GM12878 (cell line): ENCODE measurements at regions of chr5 and their contacts with region 1.

Region 1: DNA sequence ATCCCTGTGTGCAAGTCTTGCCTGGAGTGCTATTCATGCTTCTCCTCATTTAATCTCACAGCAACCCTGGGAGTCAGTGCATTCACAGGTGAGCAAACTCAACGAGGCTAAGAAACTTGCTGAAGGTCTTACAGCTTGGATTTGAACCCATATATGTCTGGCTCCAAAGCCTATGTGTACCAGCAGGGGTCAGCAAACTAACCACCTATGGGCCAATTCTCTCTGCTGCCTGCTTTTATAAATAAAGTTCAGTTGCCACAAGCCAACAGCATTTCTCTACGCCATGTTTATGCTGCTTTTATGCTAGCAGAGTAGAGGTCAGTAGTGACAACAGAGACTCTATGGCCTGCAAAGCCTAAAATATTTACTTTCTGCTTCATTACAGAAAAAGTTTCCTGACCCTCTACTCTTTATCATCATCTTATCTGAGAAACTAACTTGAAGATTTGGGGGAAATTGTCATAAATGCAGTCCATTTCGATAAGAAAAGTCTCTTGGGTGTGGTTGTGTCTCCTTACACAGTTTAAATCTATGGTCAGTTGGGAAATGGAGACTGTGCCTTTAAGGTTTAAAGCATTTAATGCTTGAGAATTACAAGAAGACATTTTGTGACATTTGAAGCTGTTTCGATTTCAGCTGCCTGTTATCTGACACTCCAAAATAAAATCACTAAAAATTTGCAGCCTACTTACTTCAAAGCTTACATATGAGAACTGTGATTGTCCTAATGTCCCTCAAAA is 137.7 kb downstream of the PRELID2 start:
- DNase-seq: no peak
- ATAC-seq: peak; percentile 85
- H3K4me3 ChIP-seq: no peak overlapping the region
- H3K27ac ChIP-seq: no peak overlapping the region
- H3K4me1 ChIP-seq: no peaks in the 10 kb centered on the region
- H3K27me3 ChIP-seq: no peaks in the 10 kb centered on the region
- CTCF ChIP-seq: peak; percentile 51 to 62 (median 62); a peak in 5 of 6 replicates
- EP300 ChIP-seq: no peak
- POLR2A ChIP-seq: no peak
- RAD21 ChIP-seq: peak; percentile 51

Region 2: DNA sequence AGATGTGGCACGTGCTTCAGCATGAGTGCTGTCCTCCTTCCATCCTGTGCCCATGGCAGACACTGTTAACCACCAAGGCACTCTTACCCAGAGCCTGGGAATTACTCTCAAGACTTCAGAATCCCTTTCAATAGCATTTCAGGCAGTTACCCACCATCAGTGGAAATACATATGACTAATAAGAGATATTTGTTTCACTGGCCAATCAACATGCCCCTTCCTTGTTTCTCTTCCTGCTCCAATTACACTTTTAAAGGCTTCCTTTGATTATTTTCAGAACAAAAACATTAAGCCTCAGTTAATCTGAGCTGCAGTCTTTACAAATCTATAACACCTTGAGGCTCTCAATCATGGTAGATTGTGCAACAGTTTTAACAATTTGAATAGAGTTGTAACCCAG is 66.9 kb after region 1 on chr5:
- CTCF ChIA-PET with region 1: no interaction called
- POLR2A ChIA-PET with region 1: no interaction called
- RAD21 ChIA-PET with region 1: no interaction called
- SMC1A ChIA-PET with region 1: no interaction called
- in situ Hi-C with region 1: no loop called
- intact Hi-C with region 1: no loop called
- DNase-seq: no peak
- ATAC-seq: no peak
- H3K4me3 ChIP-seq: no peak overlapping the region
- H3K27ac ChIP-seq: no peak overlapping the region
- H3K4me1 ChIP-seq: no peaks in the 10 kb centered on the region
- H3K27me3 ChIP-seq: no peaks in the 10 kb centered on the region
- CTCF ChIP-seq: no peak
- EP300 ChIP-seq: no peak
- POLR2A ChIP-seq: no peak
- RAD21 ChIP-seq: no peak

Region 3: GRCh38 chr5:145774442-145774841 is 77.0 kb after region 1 on chr5:
- CTCF ChIA-PET with region 1: no interaction called
- POLR2A ChIA-PET with region 1: no interaction called
- RAD21 ChIA-PET with region 1: no interaction called
- SMC1A ChIA-PET with region 1: no interaction called
- in situ Hi-C with region 1: no loop called
- intact Hi-C with region 1: no loop called
- DNase-seq: no peak
- ATAC-seq: no peak
- H3K4me3 ChIP-seq: no peak overlapping the region
- H3K27ac ChIP-seq: no peak overlapping the region
- H3K4me1 ChIP-seq: no peaks in the 10 kb centered on the region
- H3K27me3 ChIP-seq: no peaks in the 10 kb centered on the region
- CTCF ChIP-seq: no peak
- EP300 ChIP-seq: no peak
- POLR2A ChIP-seq: no peak
- RAD21 ChIP-seq: no peak

Region 4: DNA sequence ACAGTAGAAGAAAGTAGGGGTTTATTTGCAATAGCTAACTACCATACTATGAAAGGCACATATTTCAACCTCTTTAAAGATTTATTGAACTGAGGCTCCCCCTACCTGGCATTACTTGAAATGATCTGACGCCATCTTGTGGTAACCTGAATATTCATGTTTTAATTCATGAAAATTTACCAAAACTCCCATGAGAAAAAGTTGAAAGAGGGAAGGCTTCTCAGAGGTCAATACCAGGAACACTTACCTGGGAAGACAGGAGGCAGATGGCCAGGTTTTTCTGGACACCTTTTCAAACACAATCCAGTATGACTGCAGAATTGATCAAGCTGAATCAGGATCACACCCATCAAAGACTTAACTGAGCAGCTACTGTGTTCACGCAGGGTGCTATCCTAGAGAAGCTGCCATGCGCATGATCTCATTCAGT is 128.3 kb after region 1 on chr5:
- CTCF ChIA-PET with region 1: interaction called, 45 read pairs
- POLR2A ChIA-PET with region 1: no interaction called
- RAD21 ChIA-PET with region 1: interaction called, 5 read pairs
- SMC1A ChIA-PET with region 1: interaction called, 7 read pairs
- in situ Hi-C with region 1: no loop called
- intact Hi-C with region 1: loop called (anchors 1 kb)
- DNase-seq: no peak
- ATAC-seq: peak; percentile 82
- H3K4me3 ChIP-seq: no peak overlapping the region
- H3K27ac ChIP-seq: no peak overlapping the region
- H3K4me1 ChIP-seq: no peaks in the 10 kb centered on the region
- H3K27me3 ChIP-seq: no peaks in the 10 kb centered on the region
- CTCF ChIP-seq: peak; percentile 61 to 73 (median 70)
- EP300 ChIP-seq: no peak
- POLR2A ChIP-seq: no peak
- RAD21 ChIP-seq: peak; percentile 65

Region 5: DNA sequence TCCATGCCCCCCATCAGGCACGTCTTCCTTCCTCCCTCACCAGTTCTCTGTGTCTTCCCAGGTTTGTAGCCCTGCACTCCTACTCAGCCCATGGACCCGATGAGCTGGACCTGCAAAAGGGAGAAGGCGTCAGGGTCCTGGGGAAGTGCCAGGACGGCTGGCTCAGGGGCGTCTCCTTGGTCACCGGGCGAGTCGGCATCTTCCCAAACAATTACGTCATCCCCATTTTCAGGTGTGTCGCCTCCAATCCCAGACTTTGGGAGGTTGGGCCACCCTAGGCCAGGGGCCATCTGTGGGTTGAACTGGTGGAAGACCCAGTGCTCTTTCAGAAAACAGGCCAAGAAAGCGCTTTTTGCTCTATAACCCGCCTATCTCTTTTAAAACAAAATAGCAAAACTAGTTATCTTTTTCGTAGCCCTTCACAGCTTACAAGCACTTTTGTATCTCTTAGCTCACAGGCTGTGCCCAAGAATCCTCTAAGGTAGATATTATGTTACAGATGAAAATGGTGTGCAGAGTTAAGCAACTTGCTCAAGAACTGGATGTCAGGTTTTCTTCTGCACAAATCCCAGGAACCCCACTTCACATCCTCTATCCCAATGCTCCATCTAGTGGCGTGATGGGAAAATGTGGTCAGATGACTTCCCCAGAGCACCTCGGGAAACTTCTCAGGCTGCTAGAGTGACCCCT is 351.7 kb after region 1 on chr5:
- CTCF ChIA-PET with region 1: no interaction called
- POLR2A ChIA-PET with region 1: no interaction called
- RAD21 ChIA-PET with region 1: interaction called, 3 read pairs
- SMC1A ChIA-PET with region 1: no interaction called
- in situ Hi-C with region 1: no loop called
- intact Hi-C with region 1: loop called (anchors 5 kb)
- DNase-seq: no peak
- ATAC-seq: peak; percentile 59
- H3K4me3 ChIP-seq: no peak overlapping the region
- H3K27ac ChIP-seq: no peak overlapping the region
- H3K4me1 ChIP-seq: no peaks in the 10 kb centered on the region
- H3K27me3 ChIP-seq: no peaks in the 10 kb centered on the region; a peak in 3 of 4 replicates
- CTCF ChIP-seq: peak; percentile 34 to 52 (median 40); a peak in 4 of 6 replicates
- EP300 ChIP-seq: no peak
- POLR2A ChIP-seq: no peak
- RAD21 ChIP-seq: peak; percentile 68

Region 6: GRCh38 chr5:146130440-146131045 is 433.1 kb after region 1 on chr5:
- CTCF ChIA-PET with region 1: interaction called, 10 read pairs
- POLR2A ChIA-PET with region 1: no interaction called
- RAD21 ChIA-PET with region 1: interaction called, 3 read pairs
- SMC1A ChIA-PET with region 1: interaction called, 7 read pairs
- in situ Hi-C with region 1: no loop called
- intact Hi-C with region 1: loop called (anchors 5 kb)
- DNase-seq: no peak
- ATAC-seq: no peak
- H3K4me3 ChIP-seq: no peak overlapping the region
- H3K27ac ChIP-seq: no peak overlapping the region
- H3K4me1 ChIP-seq: no peaks in the 10 kb centered on the region
- H3K27me3 ChIP-seq: no peaks in the 10 kb centered on the region
- CTCF ChIP-seq: peak; percentile 30 to 58 (median 49); a peak in 5 of 6 replicates
- EP300 ChIP-seq: no peak
- POLR2A ChIP-seq: no peak
- RAD21 ChIP-seq: peak; percentile 76

Region 7: DNA sequence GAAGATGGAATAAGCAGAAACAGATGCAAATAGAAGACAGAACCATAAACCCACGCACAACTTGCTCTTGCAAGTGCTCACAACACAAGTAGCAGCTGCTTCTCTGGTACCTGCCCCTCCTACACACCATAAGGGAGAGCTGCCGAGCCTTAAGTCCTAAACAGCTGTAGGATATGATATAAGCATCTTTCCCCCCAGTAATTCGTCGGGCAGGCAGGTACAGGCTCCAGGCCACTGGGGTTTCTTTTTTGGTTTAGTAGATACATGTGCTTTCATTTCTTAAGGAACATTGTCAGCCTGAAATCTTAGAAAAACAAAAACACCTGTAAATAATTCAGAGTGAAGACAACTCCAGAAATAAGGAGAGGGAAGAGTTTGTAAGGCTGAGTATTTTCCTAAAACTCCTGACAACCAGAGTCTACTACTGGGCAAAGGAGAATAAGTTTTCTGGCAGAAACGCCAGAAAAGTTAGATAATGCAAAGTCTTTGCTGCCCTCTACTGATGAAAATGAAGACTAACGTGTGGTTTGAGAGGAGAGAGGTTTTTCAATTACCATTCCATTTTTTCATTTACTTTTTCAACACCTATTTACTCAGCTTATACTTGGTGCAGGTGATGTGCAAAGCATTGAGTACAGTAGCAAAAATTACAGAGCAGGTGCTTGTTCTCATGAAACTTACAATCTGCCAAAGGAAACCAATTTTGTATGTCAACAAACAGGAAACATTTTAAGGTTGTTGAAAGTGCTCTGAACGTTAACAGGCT is 729.6 kb after region 1 on chr5:
- CTCF ChIA-PET with region 1: interaction called, 6 read pairs
- POLR2A ChIA-PET with region 1: no interaction called
- RAD21 ChIA-PET with region 1: no interaction called
- SMC1A ChIA-PET with region 1: interaction called, 3 read pairs
- in situ Hi-C with region 1: no loop called
- intact Hi-C with region 1: loop called (anchors 5 kb)
- DNase-seq: no peak
- ATAC-seq: peak; percentile 88
- H3K4me3 ChIP-seq: no peak overlapping the region
- H3K27ac ChIP-seq: no peak overlapping the region
- H3K4me1 ChIP-seq: no peaks in the 10 kb centered on the region
- H3K27me3 ChIP-seq: no peaks in the 10 kb centered on the region; a peak in 2 of 4 replicates
- CTCF ChIP-seq: peak; percentile 57 to 77 (median 62); a peak in 5 of 6 replicates
- EP300 ChIP-seq: no peak
- POLR2A ChIP-seq: no peak
- RAD21 ChIP-seq: peak; percentile 82